Activated CD4-positive, alpha-beta T cell treated with anti-CD3 and anti-CD28 coated beads, Interleukin-2, amount 10 ng/mL, durations not matched to agents 7 days and 5 days (primary cell): ENCODE measurements at regions of chr16 and their contacts with region 1.

Region 1: GRCh38 chr16:10876799-10877341 is at the start of gene CIITA:
- DNase-seq: peak; percentile 73
- H3K4me3 Mint-ChIP-seq: peak within 1 kb of the TSS; percentile 84
- H3K27ac Mint-ChIP-seq: peak within 1 kb of the TSS; percentile 87
- H3K4me1 Mint-ChIP-seq: peaks cover 80% of the 10 kb centered on the region
- H3K27me3 Mint-ChIP-seq: peaks cover 24% of the 10 kb centered on the region
- total RNA-seq, gene CIITA: 21.5 to 24.6 TPM

Region 2: GRCh38 chr16:10835281-10835931 is 41.5 kb before region 1 on chr16:
- CTCF ChIA-PET with region 1: no interaction called
- POLR2A ChIA-PET with region 1: no interaction called
- DNase-seq: peak; percentile 7
- H3K4me3 Mint-ChIP-seq: no peak overlapping the region
- H3K27ac Mint-ChIP-seq: no peak overlapping the region
- H3K4me1 Mint-ChIP-seq: no peaks in the 10 kb centered on the region
- H3K27me3 Mint-ChIP-seq: peaks cover 13% of the 10 kb centered on the region

Region 3: GRCh38 chr16:10888320-10888937 is 11.6 kb after region 1 on chr16:
- CTCF ChIA-PET with region 1: interaction called, 11 read pairs
- POLR2A ChIA-PET with region 1: interaction called, 3 read pairs
- DNase-seq: no peak
- H3K4me3 Mint-ChIP-seq: no peak overlapping the region
- H3K27ac Mint-ChIP-seq: no peak overlapping the region
- H3K4me1 Mint-ChIP-seq: peaks cover 27% of the 10 kb centered on the region
- H3K27me3 Mint-ChIP-seq: peaks cover 25% of the 10 kb centered on the region

Region 4: GRCh38 chr16:10918294-10919002 is 41.6 kb after region 1 on chr16:
- CTCF ChIA-PET with region 1: interaction called, 12 read pairs
- POLR2A ChIA-PET with region 1: no interaction called
- DNase-seq: peak; percentile 86
- H3K4me3 Mint-ChIP-seq: no peak overlapping the region
- H3K27ac Mint-ChIP-seq: no peak overlapping the region
- H3K4me1 Mint-ChIP-seq: peaks cover 7% of the 10 kb centered on the region
- H3K27me3 Mint-ChIP-seq: no peaks in the 10 kb centered on the region